ENCODE measurements at regions of chr2 and their contacts with region 1.

Region 1: GRCh38 chr2:197399887-197400540 is 34.8 kb downstream of the SF3B1 start:
- DNase-seq: no peak
- ATAC-seq: no peak

Region 2: GRCh38 chr2:195559431-195559914 is 1840.5 kb before region 1 on chr2:
- intact Hi-C with region 1: no loop called
- DNase-seq: no peak
- ATAC-seq: no peak

Region 3: DNA sequence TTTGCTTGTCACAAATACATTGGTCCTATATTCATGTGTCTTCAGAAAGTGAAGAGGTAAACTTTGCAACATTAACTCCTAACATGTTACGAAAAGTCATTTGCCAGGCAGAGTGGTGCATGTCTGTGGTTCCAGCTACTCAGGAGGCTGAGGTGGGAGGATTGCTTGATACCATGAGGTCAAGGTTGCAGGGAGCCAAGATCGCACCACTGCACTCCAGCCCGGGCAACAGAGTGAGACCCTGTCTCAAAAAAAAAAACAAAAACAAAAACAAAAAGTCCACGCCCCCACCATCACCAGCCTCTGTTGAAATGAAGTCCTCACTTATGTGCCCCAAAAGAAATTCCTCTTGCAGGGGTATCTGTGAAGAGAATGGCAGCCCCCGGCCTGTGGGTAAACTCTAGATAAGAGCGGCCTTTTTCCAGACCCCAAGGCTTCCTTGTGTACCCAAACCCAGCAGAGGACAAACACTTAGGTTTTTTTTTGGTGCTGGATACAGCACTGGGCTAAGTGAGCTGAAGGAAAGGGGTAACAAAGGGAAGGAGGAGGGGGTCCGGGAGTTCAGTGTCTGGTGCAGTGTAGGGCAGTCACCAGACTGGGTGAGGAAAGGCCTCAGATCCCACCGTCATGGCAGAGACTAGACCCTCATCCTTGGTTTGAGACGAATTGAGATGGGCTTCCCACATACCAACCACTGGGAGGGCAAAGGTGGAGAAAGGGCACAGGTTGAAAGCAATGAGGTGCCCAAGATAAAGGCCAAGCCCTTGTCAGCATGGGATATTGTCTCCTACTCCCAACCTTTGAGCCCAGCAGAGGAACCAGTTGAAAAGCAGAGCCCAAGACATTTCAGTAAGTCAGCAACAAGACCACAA is 80.4 kb after region 1 on chr2:
- intact Hi-C with region 1: loop called (anchors 10 kb)
- DNase-seq: no peak
- ATAC-seq: no peak

Region 4: GRCh38 chr2:197538412-197538811 is 138.4 kb after region 1 on chr2:
- intact Hi-C with region 1: no loop called
- DNase-seq: no peak
- ATAC-seq: no peak

Measured in Right ventricle myocardium superior (tissue), 1 donor.